RWPE1 (cell line): ENCODE measurements at regions of chr2 and their contacts with region 1.

Region 1: GRCh38 chr2:201854221-201854801 is 48.0 kb downstream of the CDK15 start:
- DNase-seq: peak; percentile 73
- H3K27ac ChIP-seq: no peak overlapping the region
- CTCF ChIP-seq: no peak

Region 2: DNA sequence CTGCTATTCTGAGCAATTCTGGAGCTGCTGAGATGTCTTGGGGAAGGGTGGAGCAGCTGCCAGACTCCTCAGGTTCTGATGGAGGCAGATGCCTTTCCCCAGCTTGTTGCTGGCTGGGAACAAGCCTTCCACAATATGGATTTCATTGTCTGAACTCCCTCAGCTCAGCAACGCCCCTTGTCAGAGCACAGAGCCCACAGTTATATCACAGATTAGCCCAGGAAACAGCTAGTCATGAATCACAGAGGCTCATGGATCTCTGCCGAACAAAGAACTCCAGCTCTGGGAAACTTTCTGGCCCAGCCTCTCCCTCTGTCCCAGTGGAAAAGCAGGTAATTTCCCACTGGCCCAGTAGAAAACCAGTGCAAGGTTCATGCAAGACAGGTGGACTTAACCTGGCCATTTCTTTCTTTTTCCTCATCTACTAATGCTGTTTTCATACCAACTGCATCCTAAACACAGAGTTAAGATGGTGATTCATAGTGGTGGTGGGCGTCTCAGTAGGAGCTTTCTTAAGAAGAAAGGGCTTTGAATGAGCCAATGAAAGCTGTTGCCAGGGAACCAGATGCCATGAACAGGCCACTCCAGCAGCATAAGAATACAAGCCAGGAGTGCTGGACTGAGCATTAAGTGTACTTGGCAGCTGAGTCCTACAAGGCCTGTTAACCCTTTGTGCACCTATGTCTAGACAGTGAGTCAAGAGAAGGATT is 210.0 kb after region 1 on chr2:
- CTCF ChIA-PET with region 1: no interaction called
- POLR2A ChIA-PET with region 1: interaction called, 10 read pairs
- DNase-seq: no peak
- H3K27ac ChIP-seq: no peak overlapping the region
- CTCF ChIP-seq: no peak